ENCODE measurements at regions of chr3 and their contacts with region 1.

Region 1: DNA sequence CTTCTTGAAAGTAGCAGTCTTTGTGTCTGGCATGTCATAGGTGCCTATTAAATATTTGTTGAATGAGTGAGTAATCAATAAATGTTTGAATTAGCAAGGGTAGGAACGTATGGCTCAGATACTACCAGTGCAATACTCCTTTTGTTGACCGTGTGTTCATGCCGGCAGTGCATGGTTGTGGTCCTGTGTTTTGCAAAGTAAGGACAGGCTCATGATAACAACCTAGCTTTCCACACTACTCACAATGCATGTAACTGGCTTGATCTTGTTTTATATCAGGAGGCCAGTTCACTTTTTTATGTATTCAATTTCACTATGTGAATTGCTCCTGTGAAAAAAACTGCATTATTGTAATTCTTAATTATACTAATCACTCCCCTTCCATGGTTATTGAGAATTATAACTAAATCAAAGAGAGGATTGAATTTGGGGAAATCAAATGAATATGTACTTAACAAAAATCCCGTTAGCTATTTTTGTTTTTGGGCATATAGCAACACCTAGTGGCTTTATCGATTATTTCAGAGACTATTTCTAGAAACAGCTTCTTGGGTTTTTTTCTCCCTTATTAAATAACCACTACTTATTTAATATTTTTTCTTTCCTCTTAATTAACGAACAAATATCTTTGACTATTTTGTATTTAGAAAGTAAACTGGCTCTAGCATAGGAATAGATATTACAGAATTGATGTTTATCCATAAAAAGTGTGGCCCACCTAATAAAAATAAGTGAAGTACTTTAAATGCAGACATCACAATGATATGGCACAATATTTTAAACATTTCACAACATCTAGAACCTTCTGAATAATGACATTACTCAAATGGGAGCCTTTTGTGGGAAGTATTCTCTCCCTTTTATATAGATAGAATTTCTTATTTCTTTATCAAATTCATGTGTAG is 218.5 kb downstream of the BBX start:
- DNase-seq: peak; percentile 59
- H3K4me3 ChIP-seq: no peak overlapping the region
- H3K27ac ChIP-seq: no peak overlapping the region
- H3K4me1 ChIP-seq: no peaks in the 10 kb centered on the region
- H3K27me3 ChIP-seq: no peaks in the 10 kb centered on the region
- CTCF ChIP-seq: peak in 1 of 2 donors; percentile 25
- POLR2A ChIP-seq: no peak

Region 2: GRCh38 chr3:107271787-107272387 is 469.4 kb before region 1 on chr3:
- CTCF ChIA-PET with region 1: interaction called, 10 read pairs
- POLR2A ChIA-PET with region 1: no interaction called
- dilution Hi-C with region 1: no loop called
- intact Hi-C with region 1: no loop called
- DNase-seq: peak; percentile 36
- H3K4me3 ChIP-seq: no peak overlapping the region
- H3K27ac ChIP-seq: no peak overlapping the region
- H3K4me1 ChIP-seq: no peaks in the 10 kb centered on the region
- H3K27me3 ChIP-seq: peaks cover 4 to 23% of the 10 kb centered on the region in 2 experiments
- CTCF ChIP-seq: peak; percentile 30 to 33
- POLR2A ChIP-seq: no peak

Region 3: DNA sequence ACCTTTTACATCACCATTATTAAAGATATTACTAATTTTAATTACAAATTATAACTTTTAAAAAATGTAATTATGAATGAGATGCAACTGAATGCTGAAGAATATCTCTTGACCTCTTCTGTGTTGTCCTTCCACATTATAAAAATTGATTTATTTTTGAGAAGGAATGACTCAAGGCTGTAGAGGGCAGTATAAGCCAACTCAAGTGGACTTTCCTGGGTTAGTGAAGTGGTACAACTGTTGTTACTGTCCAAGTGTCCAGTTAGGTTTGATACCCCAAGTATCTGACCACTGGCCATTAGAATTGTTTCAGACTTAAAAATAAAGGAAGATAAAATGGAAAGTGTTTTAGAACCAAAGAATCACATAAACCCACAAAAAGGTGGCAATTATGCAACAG is 166.6 kb before region 1 on chr3:
- CTCF ChIA-PET with region 1: interaction called, 40 read pairs
- POLR2A ChIA-PET with region 1: no interaction called
- dilution Hi-C with region 1: no loop called
- intact Hi-C with region 1: loop called (anchors 1 kb)
- DNase-seq: peak; percentile 66
- H3K4me3 ChIP-seq: no peak overlapping the region
- H3K27ac ChIP-seq: no peak overlapping the region
- H3K4me1 ChIP-seq: no peaks in the 10 kb centered on the region
- H3K27me3 ChIP-seq: no peaks in the 10 kb centered on the region
- CTCF ChIP-seq: peak; percentile 33 to 46
- POLR2A ChIP-seq: no peak

Region 4: DNA sequence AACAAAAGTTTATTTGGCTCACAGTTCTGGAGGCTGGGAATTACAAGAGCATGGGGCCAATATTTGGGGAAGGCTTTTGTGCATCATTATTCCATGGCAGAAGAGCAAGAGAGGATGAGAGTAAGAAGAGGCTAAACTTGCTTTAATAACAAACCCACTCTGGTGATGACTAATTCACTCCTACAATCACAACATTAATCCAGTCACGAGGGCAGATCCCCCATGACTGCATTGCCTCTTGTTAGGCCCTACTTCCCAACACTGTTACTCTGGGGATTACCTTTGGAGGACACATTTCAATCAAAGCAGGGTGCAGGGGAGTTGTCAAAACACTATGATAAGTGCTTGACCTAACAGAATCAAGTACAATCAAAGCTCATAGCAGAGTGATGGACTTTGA is 36.8 kb before region 1 on chr3:
- CTCF ChIA-PET with region 1: interaction called, 15 read pairs
- POLR2A ChIA-PET with region 1: interaction called, 3 read pairs
- dilution Hi-C with region 1: no loop called
- intact Hi-C with region 1: no loop called
- DNase-seq: no peak
- H3K4me3 ChIP-seq: no peak overlapping the region
- H3K27ac ChIP-seq: no peak overlapping the region
- H3K4me1 ChIP-seq: no peaks in the 10 kb centered on the region
- H3K27me3 ChIP-seq: no peaks in the 10 kb centered on the region
- CTCF ChIP-seq: no peak
- POLR2A ChIP-seq: no peak

Region 5: DNA sequence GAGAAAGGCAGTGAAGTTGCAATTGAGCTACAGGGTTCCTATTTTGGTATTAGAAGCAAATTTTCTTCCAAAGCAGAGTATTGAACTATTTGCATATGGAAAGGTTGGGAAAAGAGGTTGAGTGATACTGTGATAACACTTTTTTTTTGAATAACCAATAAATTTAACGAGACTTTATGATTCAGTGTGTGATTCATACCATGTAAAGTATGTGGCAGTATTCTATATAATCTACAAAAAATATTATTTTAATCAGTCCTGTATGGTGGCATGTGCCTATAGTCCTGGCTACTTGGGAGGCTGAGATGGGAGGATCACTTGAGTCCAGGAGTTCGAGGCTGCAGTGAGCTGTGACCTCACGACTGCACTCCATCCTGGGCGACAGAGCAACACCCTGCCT is 11.6 kb before region 1 on chr3:
- CTCF ChIA-PET with region 1: interaction called, 10 read pairs
- POLR2A ChIA-PET with region 1: interaction called, 5 read pairs
- dilution Hi-C with region 1: no loop called
- intact Hi-C with region 1: no loop called
- DNase-seq: no peak
- H3K4me3 ChIP-seq: no peak overlapping the region
- H3K27ac ChIP-seq: no peak overlapping the region
- H3K4me1 ChIP-seq: no peaks in the 10 kb centered on the region
- H3K27me3 ChIP-seq: no peaks in the 10 kb centered on the region
- CTCF ChIP-seq: no peak
- POLR2A ChIP-seq: no peak

Region 6: DNA sequence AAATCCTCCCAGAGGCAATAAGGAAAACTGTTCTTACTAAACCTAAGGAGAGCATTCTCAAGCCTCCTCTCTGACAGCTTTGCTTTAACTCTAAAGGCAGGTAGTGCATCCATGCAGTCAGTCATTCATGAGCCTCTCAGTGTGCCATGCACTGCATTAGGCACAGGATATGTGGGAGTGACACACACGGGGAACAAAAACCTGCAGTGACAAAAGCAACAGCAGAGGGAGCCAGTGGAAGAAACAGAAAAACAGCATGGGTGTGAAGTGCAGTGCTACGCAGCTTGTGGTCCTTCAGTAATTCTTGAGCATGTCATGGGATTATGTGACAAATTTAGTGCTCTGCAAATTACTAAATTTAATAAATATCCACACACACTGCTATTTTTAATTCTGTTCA is 12.2 kb after region 1 on chr3:
- CTCF ChIA-PET with region 1: interaction called, 47 read pairs
- POLR2A ChIA-PET with region 1: no interaction called
- dilution Hi-C with region 1: no loop called
- intact Hi-C with region 1: no loop called
- DNase-seq: peak; percentile 47
- H3K4me3 ChIP-seq: no peak overlapping the region
- H3K27ac ChIP-seq: no peak overlapping the region
- H3K4me1 ChIP-seq: no peaks in the 10 kb centered on the region
- H3K27me3 ChIP-seq: no peaks in the 10 kb centered on the region
- CTCF ChIP-seq: peak; percentile 29 to 52
- POLR2A ChIP-seq: no peak

Region 7: GRCh38 chr3:107938143-107938542 is 196.9 kb after region 1 on chr3:
- CTCF ChIA-PET with region 1: no interaction called
- POLR2A ChIA-PET with region 1: no interaction called
- dilution Hi-C with region 1: no loop called
- intact Hi-C with region 1: no loop called
- DNase-seq: peak; percentile 70
- H3K4me3 ChIP-seq: no peak overlapping the region
- H3K27ac ChIP-seq: no peak overlapping the region
- H3K4me1 ChIP-seq: peaks cover 13% of the 10 kb centered on the region
- H3K27me3 ChIP-seq: no peaks in the 10 kb centered on the region
- CTCF ChIP-seq: peak; percentile 28 to 55
- POLR2A ChIP-seq: no peak

Measured in endothelial cell of umbilical vein (primary cell).